GM12878 (cell line): ENCODE measurements at regions of chr12 and their contacts with region 1.

Region 1: GRCh38 chr12:110531741-110532333 is 29.7 kb downstream of the RAD9B start:
- DNase-seq: peak; percentile 96
- ATAC-seq: peak; percentile 90
- H3K4me3 ChIP-seq: peak overlapping the region; percentile 18
- H3K27ac ChIP-seq: peak overlapping the region; percentile 80
- H3K4me1 ChIP-seq: peaks cover 71% of the 10 kb centered on the region
- H3K27me3 ChIP-seq: no peaks in the 10 kb centered on the region
- CTCF ChIP-seq: no peak
- EP300 ChIP-seq: peak; percentile 95 to 96
- POLR2A ChIP-seq: no peak; the same call in 1 of the 2 replicates
- RAD21 ChIP-seq: no peak

Region 2: DNA sequence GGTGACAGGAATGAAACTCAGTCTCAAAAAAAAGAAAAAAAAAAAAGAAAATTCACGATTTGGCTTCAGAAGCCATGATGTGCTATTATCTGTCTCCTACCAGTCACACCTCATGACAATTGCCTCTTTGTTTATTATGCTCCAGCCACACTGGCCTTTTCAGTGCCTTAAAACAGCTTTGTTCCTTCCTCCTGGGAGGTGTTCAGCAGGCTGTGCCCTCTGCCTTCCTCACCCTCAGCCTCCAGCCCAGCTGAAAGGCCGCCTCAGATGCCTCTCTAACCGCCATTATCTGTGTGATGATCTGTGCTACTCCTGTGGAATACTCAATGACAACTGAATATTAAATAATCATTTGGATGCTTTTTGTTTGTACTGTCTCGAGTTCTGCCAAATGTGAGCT is 73.1 kb before region 1 on chr12:
- CTCF ChIA-PET with region 1: no interaction called
- POLR2A ChIA-PET with region 1: interaction called, 3 read pairs
- RAD21 ChIA-PET with region 1: interaction called, 5 read pairs
- SMC1A ChIA-PET with region 1: interaction called, 14 read pairs
- in situ Hi-C with region 1: no loop called
- intact Hi-C with region 1: no loop called
- DNase-seq: no peak
- ATAC-seq: no peak
- H3K4me3 ChIP-seq: no peak overlapping the region
- H3K27ac ChIP-seq: no peak overlapping the region
- H3K4me1 ChIP-seq: peaks cover 17% of the 10 kb centered on the region
- H3K27me3 ChIP-seq: no peaks in the 10 kb centered on the region
- CTCF ChIP-seq: no peak
- EP300 ChIP-seq: no peak
- POLR2A ChIP-seq: no peak
- RAD21 ChIP-seq: no peak

Region 3: DNA sequence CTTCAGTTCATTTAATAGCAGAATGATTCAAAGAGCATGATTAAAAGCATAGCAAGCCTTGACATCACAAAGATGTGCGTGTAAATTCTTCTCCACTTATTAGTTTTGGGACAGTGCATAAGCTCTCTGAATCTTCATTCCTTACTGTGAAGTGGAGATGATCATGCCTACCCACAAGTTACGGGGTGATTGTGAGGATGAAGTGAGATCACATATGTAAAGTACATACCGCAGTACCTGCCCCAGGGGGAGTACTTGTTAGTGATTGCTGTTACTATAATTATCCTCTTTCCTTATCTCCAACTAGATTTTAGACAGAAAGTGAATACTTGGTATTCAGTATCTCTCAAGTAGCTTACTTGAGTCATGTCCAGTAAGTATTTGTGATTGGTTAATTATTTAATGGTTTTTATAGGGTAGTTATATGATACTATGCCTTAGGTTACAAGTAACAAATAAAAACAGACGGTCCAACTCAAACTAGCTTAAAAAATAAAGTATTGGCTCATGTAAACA is 23.7 kb before region 1 on chr12:
- CTCF ChIA-PET with region 1: interaction called, 34 read pairs
- POLR2A ChIA-PET with region 1: interaction called, 13 read pairs
- RAD21 ChIA-PET with region 1: interaction called, 30 read pairs
- SMC1A ChIA-PET with region 1: interaction called, 162 read pairs
- in situ Hi-C with region 1: no loop called
- intact Hi-C with region 1: no loop called
- DNase-seq: no peak
- ATAC-seq: no peak
- H3K4me3 ChIP-seq: no peak overlapping the region
- H3K27ac ChIP-seq: no peak overlapping the region
- H3K4me1 ChIP-seq: no peaks in the 10 kb centered on the region; the same call in 1 of the 2 replicates
- H3K27me3 ChIP-seq: no peaks in the 10 kb centered on the region
- CTCF ChIP-seq: no peak
- EP300 ChIP-seq: no peak
- POLR2A ChIP-seq: no peak
- RAD21 ChIP-seq: no peak

Region 4: DNA sequence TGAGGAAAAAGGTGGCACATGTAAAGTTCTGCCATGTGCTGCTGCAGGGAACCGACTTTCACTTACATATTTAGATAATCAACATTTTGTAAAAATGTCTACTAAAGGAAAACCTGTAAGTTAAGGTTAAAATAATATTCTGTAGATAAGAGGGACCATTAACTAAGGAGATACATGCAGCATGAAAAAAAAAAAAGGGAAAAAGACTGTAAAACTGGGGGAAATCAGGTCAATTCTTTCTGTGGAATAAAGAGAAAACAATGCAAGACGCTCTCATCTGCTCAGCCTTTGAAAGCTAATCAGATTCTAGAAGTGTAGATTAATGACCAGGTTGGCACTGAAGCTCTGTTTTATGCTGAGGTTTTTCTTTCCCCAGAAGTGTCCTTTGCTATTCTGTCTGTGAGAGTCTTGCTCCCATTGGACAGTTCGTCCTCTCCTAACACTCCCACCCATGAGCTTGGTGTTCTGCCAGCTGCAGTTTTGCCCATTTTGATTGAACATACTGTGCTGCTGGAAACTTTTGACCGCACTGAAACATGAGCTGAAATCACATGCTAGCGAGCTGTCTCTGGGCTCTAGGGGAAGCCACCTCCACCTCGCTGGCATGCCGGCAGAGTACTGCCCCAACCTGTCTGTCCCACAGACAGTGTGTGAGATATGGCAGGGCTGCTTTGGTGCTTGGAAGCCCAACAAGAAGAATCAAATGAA is 11.6 kb after region 1 on chr12:
- CTCF ChIA-PET with region 1: interaction called, 19 read pairs
- POLR2A ChIA-PET with region 1: interaction called, 55 read pairs
- RAD21 ChIA-PET with region 1: interaction called, 109 read pairs
- SMC1A ChIA-PET with region 1: interaction called, 116 read pairs
- in situ Hi-C with region 1: no loop called
- intact Hi-C with region 1: no loop called
- DNase-seq: peak; percentile 90
- ATAC-seq: peak; percentile 92
- H3K4me3 ChIP-seq: no peak overlapping the region; the same call in 1 of the 2 replicates
- H3K27ac ChIP-seq: peak overlapping the region; percentile 94
- H3K4me1 ChIP-seq: peaks cover 28% of the 10 kb centered on the region
- H3K27me3 ChIP-seq: no peaks in the 10 kb centered on the region
- CTCF ChIP-seq: no peak
- EP300 ChIP-seq: peak in 1 of 2 experiments; percentile 53; a peak in 1 of 4 replicates
- POLR2A ChIP-seq: 0 out of 2 replicates have a peak, but pooled peaks have one; percentile 26
- RAD21 ChIP-seq: no peak

Region 5: DNA sequence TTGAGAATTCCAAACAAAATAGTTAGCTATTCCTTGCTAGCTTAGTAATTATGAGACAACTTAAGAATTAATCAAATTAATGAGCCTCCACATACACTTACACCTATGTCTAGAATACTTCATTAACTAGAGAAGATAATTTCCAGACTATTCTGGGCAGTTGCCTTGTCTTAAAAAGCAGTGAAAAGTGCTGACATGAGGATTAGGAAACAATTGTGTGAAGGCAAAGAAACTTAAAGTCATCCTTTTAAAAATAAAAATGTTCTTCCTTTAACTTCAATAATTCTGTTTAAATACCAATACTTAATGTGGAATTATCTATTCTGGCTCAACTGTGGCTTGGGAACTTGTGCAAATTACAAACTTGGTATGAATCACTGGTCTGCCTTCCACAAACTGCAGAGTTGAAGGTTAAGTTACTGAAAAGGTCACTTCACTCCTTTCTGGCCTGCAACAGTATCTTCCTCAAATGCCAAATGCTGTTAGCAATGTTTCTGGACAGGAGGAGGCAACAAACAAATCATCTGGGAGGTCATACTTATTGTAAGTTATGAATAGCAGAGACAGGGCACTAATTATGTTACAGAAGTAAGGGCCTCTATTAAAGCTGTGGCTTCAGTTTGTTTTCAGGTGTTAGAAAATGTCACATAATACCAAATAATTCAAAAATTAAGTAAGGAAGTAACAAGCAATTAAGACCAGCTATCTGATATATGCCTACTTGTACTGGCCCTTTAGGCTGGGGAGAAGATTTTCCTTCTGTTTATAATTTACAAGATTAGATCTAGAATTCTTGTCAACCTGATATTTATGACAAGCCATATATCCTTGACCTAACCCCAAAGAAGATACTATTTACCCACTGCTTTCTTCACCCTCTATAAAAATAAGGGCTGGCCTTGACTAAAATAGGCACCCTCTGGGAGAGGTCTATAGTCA is 32.1 kb after region 1 on chr12:
- CTCF ChIA-PET with region 1: interaction called, 4 read pairs
- POLR2A ChIA-PET with region 1: interaction called, 11 read pairs
- RAD21 ChIA-PET with region 1: interaction called, 7 read pairs
- SMC1A ChIA-PET with region 1: interaction called, 11 read pairs
- in situ Hi-C with region 1: no loop called
- intact Hi-C with region 1: no loop called
- DNase-seq: no peak
- ATAC-seq: peak; percentile 10; the same call in 1 of the 3 replicates
- H3K4me3 ChIP-seq: no peak overlapping the region
- H3K27ac ChIP-seq: peak overlapping the region; percentile 33; the same call in 1 of the 2 replicates
- H3K4me1 ChIP-seq: peaks cover 20% of the 10 kb centered on the region; the same call in 1 of the 2 replicates
- H3K27me3 ChIP-seq: no peaks in the 10 kb centered on the region
- CTCF ChIP-seq: no peak
- EP300 ChIP-seq: no peak
- POLR2A ChIP-seq: no peak
- RAD21 ChIP-seq: no peak

Region 6: DNA sequence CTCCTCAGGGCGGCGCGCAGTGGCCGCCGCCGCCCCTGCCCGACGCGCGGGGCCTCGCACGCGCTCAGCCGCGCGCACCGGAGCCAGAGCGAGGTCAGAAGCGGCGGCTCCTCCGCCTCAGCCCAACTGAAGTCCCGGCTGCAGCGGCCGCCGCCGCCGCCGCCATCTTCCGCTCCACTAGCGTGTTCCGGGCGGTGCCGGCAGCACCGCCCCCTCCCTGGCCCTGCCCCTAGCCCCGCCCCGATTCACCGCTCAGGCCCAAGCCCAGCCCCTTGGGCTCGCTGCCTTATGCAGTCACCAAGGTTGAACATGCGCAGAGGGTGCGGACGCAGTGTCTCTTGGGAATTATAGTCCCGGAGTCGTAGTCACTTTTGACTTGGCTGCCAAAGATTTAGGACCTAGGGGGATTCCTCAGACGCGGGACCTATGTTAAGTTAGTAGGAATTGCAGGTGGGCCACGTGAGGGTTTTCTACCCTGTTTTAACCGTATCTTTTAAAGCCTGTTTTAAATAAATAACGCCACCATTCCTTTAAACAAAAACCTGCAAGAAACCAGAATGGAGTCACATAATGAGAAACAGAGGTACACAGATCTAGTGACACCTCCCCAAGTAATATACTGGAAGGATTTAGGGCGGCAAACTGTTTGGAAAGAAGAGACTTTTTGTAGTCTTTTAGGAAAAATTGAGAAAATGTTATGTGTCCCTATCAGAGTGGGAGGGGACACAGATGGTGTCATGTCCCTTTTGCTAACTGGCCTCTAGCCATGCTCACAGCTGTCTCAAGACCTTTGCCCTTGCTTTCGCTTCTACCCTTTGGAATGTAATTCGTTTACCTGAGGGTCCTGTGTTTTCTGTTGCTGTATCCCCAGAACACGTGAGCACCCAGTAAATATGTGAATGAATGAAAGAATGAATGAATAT is 51.6 kb after region 1 on chr12 and contains the start of gene PPTC7:
- CTCF ChIA-PET with region 1: interaction called, 14 read pairs
- POLR2A ChIA-PET with region 1: interaction called, 122 read pairs
- RAD21 ChIA-PET with region 1: interaction called, 73 read pairs
- SMC1A ChIA-PET with region 1: interaction called, 308 read pairs
- in situ Hi-C with region 1: no loop called
- intact Hi-C with region 1: loop called (anchors 2 kb)
- DNase-seq: peak; percentile 91
- ATAC-seq: peak; percentile 85
- H3K4me3 ChIP-seq: peak within 1 kb of the TSS; percentile 82
- H3K27ac ChIP-seq: peak within 1 kb of the TSS; percentile 95
- H3K4me1 ChIP-seq: peaks cover 36% of the 10 kb centered on the region
- H3K27me3 ChIP-seq: no peaks in the 10 kb centered on the region
- CTCF ChIP-seq: no peak
- EP300 ChIP-seq: no peak
- POLR2A ChIP-seq: peak; percentile 72
- RAD21 ChIP-seq: no peak
- polyA plus RNA-seq, gene PPTC7: 5.0 to 8.9 TPM

Region 7: DNA sequence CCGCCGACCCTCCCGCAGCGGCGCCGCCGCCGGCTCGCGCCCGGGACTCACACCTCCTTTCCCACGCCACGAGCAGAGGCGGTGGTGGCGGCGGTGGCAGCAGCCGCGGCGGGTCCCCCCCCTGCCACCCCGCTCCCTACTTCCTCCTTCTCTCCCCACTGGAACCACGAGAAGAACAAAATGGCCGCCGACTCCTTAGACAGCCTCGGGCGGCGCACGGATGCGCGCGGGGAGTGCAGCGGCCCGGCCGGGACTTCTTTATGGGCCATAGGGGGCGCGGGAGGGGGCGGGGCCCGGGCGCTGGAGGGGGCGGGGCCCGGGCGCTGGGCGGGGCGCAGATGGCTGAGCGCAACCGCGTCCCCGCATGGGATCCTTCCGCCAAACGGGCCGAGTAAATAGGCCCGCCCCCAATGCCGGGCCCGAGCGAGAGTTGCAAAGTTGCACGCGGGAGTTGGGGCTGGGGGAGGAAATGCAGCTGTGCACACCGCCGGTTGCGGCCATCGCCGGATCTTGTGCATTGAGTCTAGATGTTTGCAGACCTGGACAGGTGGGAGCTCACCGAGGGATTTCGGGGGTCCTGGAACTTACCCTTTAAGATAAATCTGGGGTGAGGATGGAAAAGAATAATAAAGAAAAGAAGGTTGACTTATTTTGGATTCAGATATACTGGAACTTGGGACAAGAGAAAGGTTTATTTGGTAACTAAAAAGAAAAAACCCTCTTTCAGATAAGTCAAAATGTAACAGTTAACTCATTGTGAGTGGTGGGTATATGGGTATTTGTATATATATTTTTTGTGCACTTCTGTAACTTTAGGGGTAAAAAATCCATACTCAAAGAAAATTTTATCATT is 211.1 kb after region 1 on chr12 and contains the start of gene PPP1CC:
- CTCF ChIA-PET with region 1: no interaction called
- POLR2A ChIA-PET with region 1: no interaction called
- RAD21 ChIA-PET with region 1: no interaction called
- SMC1A ChIA-PET with region 1: no interaction called
- in situ Hi-C with region 1: no loop called
- intact Hi-C with region 1: no loop called
- DNase-seq: peak; percentile 48
- ATAC-seq: peak; percentile 84
- H3K4me3 ChIP-seq: peak within 1 kb of the TSS; percentile 85
- H3K27ac ChIP-seq: peak within 1 kb of the TSS; percentile 63
- H3K4me1 ChIP-seq: peaks cover 6% of the 10 kb centered on the region; the same call in 1 of the 2 replicates
- H3K27me3 ChIP-seq: no peaks in the 10 kb centered on the region
- CTCF ChIP-seq: no peak
- EP300 ChIP-seq: no peak
- POLR2A ChIP-seq: peak; percentile 95
- RAD21 ChIP-seq: no peak
- polyA plus RNA-seq, gene PPP1CC: 64.4 to 111 TPM

Region 8: DNA sequence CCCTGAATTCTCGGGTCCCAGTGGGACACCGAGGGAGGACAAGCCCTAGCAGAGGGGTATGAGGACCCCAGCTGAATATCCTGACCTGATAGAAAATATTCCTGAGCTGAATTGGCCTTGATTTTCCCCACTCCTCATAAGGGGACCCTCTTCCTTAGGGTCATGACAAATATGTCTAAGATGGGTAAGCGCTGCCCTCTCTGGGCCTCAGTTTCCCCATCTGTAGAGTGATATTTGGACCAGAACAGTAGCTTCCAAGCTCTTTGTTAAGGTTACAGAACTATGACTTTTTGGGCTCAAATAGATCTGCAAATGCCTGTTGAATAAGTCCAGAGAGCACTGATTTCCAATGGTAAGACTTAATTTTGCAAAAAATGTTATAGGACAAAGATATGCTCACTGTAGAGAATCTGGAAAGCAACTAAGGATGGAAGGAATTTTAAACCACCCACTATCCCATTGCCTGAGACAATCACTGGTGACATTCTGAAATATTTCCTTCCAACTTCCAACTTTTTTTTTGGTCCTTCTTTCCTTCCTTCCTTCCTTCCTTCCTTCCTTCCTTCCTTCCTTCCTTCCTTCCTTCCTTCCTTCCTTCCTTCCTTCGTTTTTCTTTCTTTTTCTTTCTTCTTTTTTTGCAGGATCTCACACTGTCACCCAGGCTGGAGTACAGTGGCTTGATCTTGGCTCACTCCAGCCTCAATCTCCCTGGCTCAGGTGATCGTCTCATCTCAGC is 356.6 kb after region 1 on chr12:
- CTCF ChIA-PET with region 1: no interaction called
- POLR2A ChIA-PET with region 1: no interaction called
- RAD21 ChIA-PET with region 1: no interaction called
- SMC1A ChIA-PET with region 1: no interaction called
- in situ Hi-C with region 1: no loop called
- intact Hi-C with region 1: loop called (anchors 10 kb)
- DNase-seq: no peak
- ATAC-seq: no peak
- H3K4me3 ChIP-seq: no peak overlapping the region
- H3K27ac ChIP-seq: no peak overlapping the region
- H3K4me1 ChIP-seq: no peaks in the 10 kb centered on the region
- H3K27me3 ChIP-seq: no peaks in the 10 kb centered on the region; a peak in 1 of 4 replicates
- CTCF ChIP-seq: no peak
- EP300 ChIP-seq: no peak
- POLR2A ChIP-seq: no peak
- RAD21 ChIP-seq: no peak